SK-N-SH (cell line): ENCODE measurements at regions of chr7 and their contacts with region 1.

Region 1: GRCh38 chr7:111561885-111562732 is at the start of gene IMMP2L:
- DNase-seq: peak; percentile 99
- H3K4me3 ChIP-seq: peak within 1 kb of the TSS; percentile 73 to 95
- H3K27ac ChIP-seq: peak within 1 kb of the TSS; percentile 28 to 97
- H3K4me1 ChIP-seq: peaks cover 14 to 37% of the 10 kb centered on the region in 2 experiments; a peak in 3 of 4 replicates
- H3K27me3 ChIP-seq: no peaks in the 10 kb centered on the region
- CTCF ChIP-seq: peak; percentile 59
- EP300 ChIP-seq: peak in 1 of 2 experiments; percentile 35; a peak in 1 of 4 replicates
- RAD21 ChIP-seq: peak; percentile 65
- polyA plus RNA-seq, gene IMMP2L: 10.7 and 13.8 TPM in 2 replicates

Region 2: DNA sequence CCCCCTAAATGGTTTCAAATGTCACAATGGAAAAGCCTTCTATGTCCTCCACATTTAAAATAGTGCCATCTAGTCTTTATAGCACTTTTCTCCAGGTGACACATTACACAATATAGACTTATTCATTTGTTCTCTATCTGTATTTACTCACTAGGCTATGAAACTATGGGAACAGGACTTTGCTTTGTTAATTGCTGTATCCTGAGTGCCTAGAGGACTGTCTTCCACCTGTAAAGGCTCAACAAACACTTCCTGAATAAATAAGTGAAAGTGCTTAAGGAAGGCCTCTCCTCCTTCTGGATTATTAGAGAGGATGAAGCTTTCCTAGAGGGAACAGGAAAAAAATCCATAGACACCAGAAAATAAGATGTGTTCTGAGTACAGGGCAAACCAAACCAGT is 868.8 kb before region 1 on chr7:
- CTCF ChIA-PET with region 1: no interaction called
- POLR2A ChIA-PET with region 1: no interaction called
- DNase-seq: no peak
- H3K4me3 ChIP-seq: no peak overlapping the region
- H3K27ac ChIP-seq: no peak overlapping the region
- H3K4me1 ChIP-seq: no peaks in the 10 kb centered on the region
- H3K27me3 ChIP-seq: no peaks in the 10 kb centered on the region
- CTCF ChIP-seq: no peak
- EP300 ChIP-seq: no peak
- RAD21 ChIP-seq: no peak

Region 3: GRCh38 chr7:111499037-111499655 is 63.0 kb before region 1 on chr7:
- CTCF ChIA-PET with region 1: no interaction called
- POLR2A ChIA-PET with region 1: no interaction called
- DNase-seq: no peak
- H3K4me3 ChIP-seq: no peak overlapping the region
- H3K27ac ChIP-seq: no peak overlapping the region
- H3K4me1 ChIP-seq: no peaks in the 10 kb centered on the region; a peak in 1 of 4 replicates
- H3K27me3 ChIP-seq: no peaks in the 10 kb centered on the region
- CTCF ChIP-seq: no peak
- EP300 ChIP-seq: no peak
- RAD21 ChIP-seq: no peak

Region 4: GRCh38 chr7:111525100-111525499 is 37.0 kb before region 1 on chr7:
- CTCF ChIA-PET with region 1: no interaction called
- POLR2A ChIA-PET with region 1: no interaction called
- DNase-seq: no peak
- H3K4me3 ChIP-seq: no peak overlapping the region
- H3K27ac ChIP-seq: no peak overlapping the region; a peak in 1 of 4 replicates
- H3K4me1 ChIP-seq: peaks cover 5 to 6% of the 10 kb centered on the region in 2 experiments; a peak in 3 of 4 replicates
- H3K27me3 ChIP-seq: no peaks in the 10 kb centered on the region
- CTCF ChIP-seq: no peak
- EP300 ChIP-seq: no peak
- RAD21 ChIP-seq: no peak

Region 5: DNA sequence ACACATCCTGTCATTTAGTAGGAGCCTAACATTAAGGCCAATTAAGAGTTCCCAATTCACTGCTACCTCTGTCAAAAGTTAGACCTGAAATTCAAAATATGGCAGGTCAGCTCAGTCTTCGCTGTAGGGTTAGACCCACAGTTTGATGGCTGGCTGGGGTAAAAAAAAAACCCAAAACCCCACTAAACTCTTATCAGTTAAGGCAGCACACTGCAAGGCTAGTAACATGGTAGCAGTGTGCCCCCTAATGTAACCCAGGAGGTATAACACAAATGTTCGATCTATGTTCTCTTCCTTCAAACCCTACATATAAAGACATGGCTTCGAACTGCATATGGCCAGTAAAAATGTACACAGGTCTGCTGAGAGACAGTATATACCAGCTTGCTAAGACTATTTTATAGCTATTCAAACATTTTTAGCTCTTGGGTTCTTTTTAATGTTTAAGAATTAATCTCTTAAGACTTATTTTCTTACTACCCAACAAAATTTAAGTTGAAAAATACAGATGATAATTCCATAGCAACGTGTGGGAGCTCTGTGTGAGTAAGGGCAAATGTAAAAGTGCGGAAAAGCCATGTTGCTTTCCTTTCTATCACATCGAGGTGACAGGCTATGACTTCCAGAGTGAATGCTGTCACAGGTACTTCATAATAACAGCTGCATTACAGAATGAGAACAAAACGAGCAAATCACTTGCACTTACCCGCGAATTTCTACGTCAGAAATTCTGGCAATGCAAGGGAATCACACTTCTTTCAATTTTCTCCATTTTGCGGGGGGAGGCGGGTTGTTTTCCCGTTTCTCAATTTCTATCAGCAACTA is 168.6 kb after region 1 on chr7:
- CTCF ChIA-PET with region 1: interaction called, 13 read pairs
- POLR2A ChIA-PET with region 1: interaction called, 3 read pairs
- DNase-seq: peak; percentile 71
- H3K4me3 ChIP-seq: no peak overlapping the region
- H3K27ac ChIP-seq: peak overlapping the region in 1 of 2 experiments; percentile 67; a peak in 2 of 4 replicates
- H3K4me1 ChIP-seq: peaks cover 0 to 24% of the 10 kb centered on the region in 2 experiments; a peak in 2 of 4 replicates
- H3K27me3 ChIP-seq: no peaks in the 10 kb centered on the region
- CTCF ChIP-seq: peak; percentile 78
- EP300 ChIP-seq: no peak
- RAD21 ChIP-seq: peak; percentile 91

Region 6: GRCh38 chr7:111735661-111736551 is 173.8 kb after region 1 on chr7:
- CTCF ChIA-PET with region 1: interaction called, 13 read pairs
- POLR2A ChIA-PET with region 1: no interaction called
- DNase-seq: peak; percentile 77
- H3K4me3 ChIP-seq: no peak overlapping the region; a peak in 1 of 4 replicates
- H3K27ac ChIP-seq: no peak overlapping the region; a peak in 1 of 4 replicates
- H3K4me1 ChIP-seq: peaks cover 0 to 19% of the 10 kb centered on the region in 2 experiments; a peak in 2 of 4 replicates
- H3K27me3 ChIP-seq: no peaks in the 10 kb centered on the region
- CTCF ChIP-seq: peak; percentile 98
- EP300 ChIP-seq: peak in 1 of 2 experiments; percentile 46; a peak in 1 of 4 replicates
- RAD21 ChIP-seq: peak; percentile 100